ENCODE measurements at regions of chr2 and their contacts with region 1.

Region 1: DNA sequence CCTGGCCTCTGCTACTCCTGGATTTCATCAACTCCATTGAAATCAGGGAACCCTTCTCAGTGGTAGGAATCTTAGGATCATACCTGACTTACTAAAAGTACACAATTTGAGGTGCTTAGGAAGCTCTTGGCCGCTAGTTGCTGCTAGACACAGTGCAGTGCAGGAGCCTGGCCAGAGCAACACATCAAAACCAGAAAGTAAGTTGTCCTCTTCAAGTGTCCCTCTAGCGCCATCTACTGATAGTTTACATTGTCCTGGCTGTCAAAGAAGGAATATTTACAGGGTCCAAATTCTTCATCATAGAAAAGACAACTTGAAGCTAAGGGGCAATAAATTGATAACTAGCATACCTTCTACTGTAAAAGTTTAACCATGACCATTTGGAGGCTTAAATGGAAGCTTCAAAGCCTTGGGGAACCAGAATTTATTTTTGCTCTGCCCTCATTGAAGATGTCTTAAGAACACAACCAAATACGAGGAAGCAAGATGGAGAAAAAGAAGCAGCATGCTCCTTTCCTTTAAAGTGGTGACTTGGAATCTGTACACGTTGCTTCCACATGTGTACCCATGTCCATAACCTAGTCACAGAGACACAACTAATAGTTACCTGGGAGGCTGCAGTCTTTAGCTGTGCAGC is 889.1 kb upstream of the GCFC2 start:
- ATAC-seq: peak; percentile 82 to 99 (median 93)
- H3K4me3 ChIP-seq: no peak overlapping the region
- H3K27ac ChIP-seq: no peak overlapping the region
- H3K4me1 ChIP-seq: no peaks in the 10 kb centered on the region

Region 2: DNA sequence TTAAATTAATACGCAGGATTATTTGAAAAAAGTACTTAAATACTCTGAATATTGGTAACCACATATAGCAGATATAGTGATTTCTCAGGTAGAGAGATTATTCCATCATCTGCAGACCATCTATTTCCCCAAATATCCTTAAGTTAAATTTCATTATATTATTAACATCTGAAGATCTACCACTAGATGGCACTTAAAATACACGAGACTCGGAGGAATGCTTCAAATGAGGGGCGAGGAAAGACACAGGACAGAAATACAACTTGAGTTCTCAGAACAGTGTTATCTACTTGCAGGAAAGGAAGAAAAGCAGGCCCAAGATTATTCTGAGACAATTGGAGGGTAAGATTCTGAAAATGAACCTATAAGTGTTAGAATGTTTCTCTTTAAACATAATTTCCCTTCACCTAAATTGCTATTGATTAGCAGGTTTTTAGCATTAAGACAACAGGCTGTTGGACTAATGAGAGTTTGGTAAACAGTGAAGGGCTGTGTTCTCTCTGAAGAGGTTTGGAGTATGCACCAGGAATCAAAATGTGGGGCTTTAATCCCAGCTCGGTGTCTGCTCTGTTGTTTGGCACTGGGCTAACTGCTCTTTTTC is 812.2 kb before region 1 on chr2:
- in situ Hi-C with region 1: loop called in 3 of 9 experiments (anchors 25 kb)
- ATAC-seq: peak in 5 of 8 experiments; percentile 37 to 55 (median 45)
- H3K4me3 ChIP-seq: no peak overlapping the region
- H3K27ac ChIP-seq: no peak overlapping the region
- H3K4me1 ChIP-seq: peaks cover 0 to 2% of the 10 kb centered on the region in 2 donors

Region 3: DNA sequence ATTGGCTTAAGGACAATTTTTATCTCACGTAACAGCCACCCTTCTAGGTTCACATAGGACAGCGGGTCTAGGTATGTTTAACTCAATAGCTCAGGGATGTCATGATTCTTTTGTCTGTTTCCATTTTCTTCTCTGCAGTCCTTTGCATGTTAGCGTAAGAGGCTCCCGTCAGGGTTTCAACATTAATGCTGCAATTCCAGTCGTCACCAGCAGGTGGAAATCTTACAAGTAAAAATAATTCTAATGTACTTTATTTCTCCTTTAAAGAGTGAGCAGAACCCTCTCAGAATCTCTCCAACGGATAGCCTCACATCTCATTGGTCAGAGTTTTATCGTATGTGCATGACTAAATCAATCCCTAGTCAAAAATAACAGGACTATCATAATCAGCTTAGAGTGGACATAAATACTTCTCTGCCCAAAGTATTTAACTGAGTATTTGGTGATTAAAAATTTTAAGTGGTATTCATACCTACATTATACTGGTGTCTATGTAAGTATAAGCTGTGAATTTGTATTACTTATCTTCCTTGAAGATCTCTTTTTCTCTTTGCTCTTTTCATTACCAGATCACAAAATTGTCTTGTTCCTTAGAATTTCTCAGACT is 401.9 kb before region 1 on chr2:
- in situ Hi-C with region 1: loop called in 2 of 9 experiments (anchors 25 kb)
- ATAC-seq: peak in 3 of 8 experiments; percentile 62 to 82 (median 81)
- H3K4me3 ChIP-seq: no peak overlapping the region
- H3K27ac ChIP-seq: no peak overlapping the region
- H3K4me1 ChIP-seq: no peaks in the 10 kb centered on the region

Region 4: GRCh38 chr2:76211991-76212985 is 387.6 kb before region 1 on chr2:
- in situ Hi-C with region 1: loop called in 1 of 9 experiments (anchors 25 kb)
- ATAC-seq: peak in 5 of 8 experiments; percentile 49 to 76 (median 71)
- H3K4me3 ChIP-seq: no peak overlapping the region
- H3K27ac ChIP-seq: no peak overlapping the region
- H3K4me1 ChIP-seq: peaks cover 6 to 8% of the 10 kb centered on the region in 2 donors

Region 5: DNA sequence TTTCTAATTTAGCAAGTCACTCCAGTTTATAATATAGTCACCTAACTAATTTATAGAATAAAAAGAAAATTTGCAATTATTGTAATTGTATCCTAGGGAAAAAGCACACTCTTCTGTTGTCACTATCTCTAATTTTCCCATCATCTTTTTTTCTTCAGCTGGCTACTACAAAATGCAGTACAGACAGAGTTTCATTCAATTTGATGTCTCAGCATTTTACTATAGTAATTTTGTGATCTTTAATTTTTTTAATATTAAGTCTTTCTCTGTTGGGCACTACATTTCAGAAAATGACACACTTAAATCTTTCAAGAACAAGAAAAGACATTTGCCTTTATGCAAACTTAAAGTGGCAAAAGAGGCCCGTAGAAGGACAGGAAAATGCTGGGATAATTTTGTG is 804.3 kb after region 1 on chr2:
- in situ Hi-C with region 1: no loop called
- ATAC-seq: no peak
- H3K4me3 ChIP-seq: no peak overlapping the region
- H3K27ac ChIP-seq: no peak overlapping the region
- H3K4me1 ChIP-seq: peaks cover 0 to 5% of the 10 kb centered on the region in 2 donors